Naive thymus-derived CD8-positive, alpha-beta T cell (primary cell): ENCODE measurements at regions of chr10 and their contacts with region 1.

Region 1: GRCh38 chr10:112375721-112376395 is 1.9 kb downstream of the ACSL5 start:
- DNase-seq: peak in 8 of 10 donors; percentile 33 to 72 (median 56)
- ATAC-seq: peak; percentile 65 to 75
- H3K4me3 Mint-ChIP-seq: peak overlapping the region; percentile 97 to 100 (median 100)
- H3K27ac Mint-ChIP-seq: peak overlapping the region; percentile 99 to 100 (median 100)
- H3K4me1 Mint-ChIP-seq: peaks cover 32 to 89% (median 83%) of the 10 kb centered on the region in 4 donors
- H3K27me3 Mint-ChIP-seq: no peaks in the 10 kb centered on the region

Region 2: GRCh38 chr10:112389147-112389822 is 13.4 kb after region 1 on chr10:
- POLR2A ChIA-PET with region 1: interaction called, 37 read pairs
- DNase-seq: peak in 6 of 10 donors; percentile 10 to 48 (median 38)
- ATAC-seq: peak; percentile 23 to 74
- H3K4me3 Mint-ChIP-seq: peak overlapping the region in 8 of 10 donors; percentile 29 to 53 (median 46)
- H3K27ac Mint-ChIP-seq: peak overlapping the region; percentile 16 to 87 (median 74)
- H3K4me1 Mint-ChIP-seq: peaks cover 30 to 72% (median 62%) of the 10 kb centered on the region in 4 donors
- H3K27me3 Mint-ChIP-seq: no peaks in the 10 kb centered on the region

Region 3: DNA sequence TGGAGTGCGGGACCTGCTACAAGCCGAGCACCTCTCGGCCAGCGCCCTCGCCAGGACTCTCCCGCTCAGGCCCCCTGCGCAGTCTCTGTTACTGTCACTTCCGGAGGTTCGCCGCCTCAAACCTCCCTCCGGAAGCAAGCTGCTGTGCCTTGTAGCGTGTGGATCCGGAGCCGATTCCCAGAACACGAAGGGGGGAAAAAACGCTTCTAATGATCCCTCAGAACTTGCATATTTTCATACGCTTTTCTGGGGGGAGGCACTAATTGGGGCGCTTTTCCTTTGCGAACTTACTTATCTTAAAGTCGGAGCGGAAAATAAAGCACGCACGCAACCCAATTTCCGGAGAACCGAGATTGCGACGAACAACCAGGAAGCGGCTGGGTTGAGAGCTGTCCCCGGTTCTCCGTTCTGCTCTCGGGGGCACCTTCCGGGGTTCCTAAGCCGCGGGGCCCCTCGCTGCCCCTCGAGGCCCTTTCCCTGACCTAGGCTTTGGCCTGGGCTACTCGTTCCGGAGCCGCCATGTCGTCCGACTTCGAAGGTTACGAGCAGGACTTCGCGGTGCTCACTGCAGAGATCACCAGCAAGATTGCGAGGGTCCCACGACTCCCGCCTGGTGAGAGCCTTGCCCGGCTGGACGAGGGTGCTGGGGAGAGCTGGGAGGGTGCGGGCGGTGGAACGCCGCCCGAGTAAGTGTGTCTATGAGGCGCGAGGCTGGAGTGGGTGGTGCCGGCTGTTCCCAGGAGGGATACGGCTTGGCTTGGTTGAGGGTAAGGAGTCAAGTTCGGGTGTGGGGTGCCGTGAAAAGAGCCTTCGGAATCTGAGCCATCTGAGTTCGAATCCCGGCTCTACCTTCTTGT is 71.2 kb after region 1 on chr10 and contains the starts of genes VTI1A and ZDHHC6:
- POLR2A ChIA-PET with region 1: interaction called, 20 read pairs
- DNase-seq: peak; percentile 71 to 93 (median 81)
- ATAC-seq: peak; percentile 88
- H3K4me3 Mint-ChIP-seq: peak within 1 kb of the TSS; percentile 87 to 100 (median 97)
- H3K27ac Mint-ChIP-seq: peak within 1 kb of the TSS; percentile 95 to 100 (median 98)
- H3K4me1 Mint-ChIP-seq: peaks cover 20 to 75% (median 60%) of the 10 kb centered on the region in 4 donors
- H3K27me3 Mint-ChIP-seq: no peaks in the 10 kb centered on the region
- polyA plus RNA-seq, gene VTI1A: 24.4 to 30.2 (median 26.2) TPM
- polyA plus RNA-seq, gene ZDHHC6: 27.5 to 34.8 (median 31.6) TPM